ENCODE measurements at regions of chr2 and their contacts with region 1.

Region 1: GRCh38 chr2:164430166-164430783 is 191.0 kb downstream of the GRB14 start:
- DNase-seq: no peak

Region 2: DNA sequence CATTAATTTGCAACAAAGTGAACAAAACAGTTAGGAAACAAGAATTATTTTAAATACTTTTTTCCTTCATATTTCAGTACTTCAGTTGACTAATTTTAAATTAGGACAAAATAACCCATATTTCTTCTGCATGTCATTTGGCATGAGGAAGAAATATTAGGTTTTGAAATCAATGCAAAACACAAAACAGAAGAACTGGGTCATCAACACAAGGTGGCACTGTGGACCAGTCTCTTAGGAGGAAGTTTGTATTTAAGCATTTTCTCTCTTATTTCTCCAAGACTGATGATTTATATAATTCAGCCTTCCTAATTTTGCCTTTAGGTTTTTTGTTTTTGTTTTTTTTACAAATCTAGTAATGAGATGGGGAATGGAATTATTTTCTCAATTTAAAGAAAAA is 1238.9 kb before region 1 on chr2:
- intact Hi-C with region 1: loop called (anchors 5 kb)
- DNase-seq: no peak

Region 3: DNA sequence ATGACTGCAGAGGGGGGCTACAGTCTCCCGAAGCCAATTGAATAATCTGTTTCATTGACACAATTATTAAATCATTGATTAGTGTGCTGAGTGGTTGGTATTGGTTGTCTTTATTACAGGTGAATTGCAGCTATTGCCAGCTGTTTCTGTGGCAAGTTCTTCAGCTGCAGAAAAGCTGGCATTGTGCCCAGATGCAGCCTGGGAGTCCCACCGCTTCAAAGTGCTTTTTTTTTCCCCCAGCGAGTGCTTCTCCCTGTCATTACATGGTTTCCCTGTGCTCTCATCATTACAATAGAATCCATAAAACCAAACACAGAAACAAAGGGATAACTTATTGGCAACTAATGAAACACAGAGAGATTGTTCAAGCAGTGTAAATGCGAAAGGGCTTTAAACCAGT is 26.3 kb after region 1 on chr2:
- intact Hi-C with region 1: no loop called
- DNase-seq: no peak

Region 4: GRCh38 chr2:164706522-164706921 is 276.2 kb after region 1 on chr2:
- intact Hi-C with region 1: no loop called
- DNase-seq: no peak

Measured in cardiac septum (tissue), 1 donor.